ENCODE measurements at regions of chrX and their contacts with region 1.

Region 1: GRCh38 chrX:46903458-46904242 is 8.6 kb upstream of the JADE3 start:
- DNase-seq: peak; percentile 72
- ATAC-seq: peak; percentile 98
- H3K4me3 Mint-ChIP-seq: peak overlapping the region; percentile 61
- H3K27ac Mint-ChIP-seq: no peak overlapping the region
- H3K4me1 Mint-ChIP-seq: peaks cover 5% of the 10 kb centered on the region; the same call in 1 of the 2 replicates
- H3K27me3 Mint-ChIP-seq: no peaks in the 10 kb centered on the region; the same call in 1 of the 2 replicates
- CTCF ChIP-seq: no peak

Region 2: GRCh38 chrX:47030339-47030738 is 126.7 kb after region 1 on chrX:
- CTCF ChIA-PET with region 1: interaction called, 10 read pairs
- POLR2A ChIA-PET with region 1: no interaction called
- DNase-seq: no peak
- ATAC-seq: no peak
- H3K4me3 Mint-ChIP-seq: no peak overlapping the region
- H3K27ac Mint-ChIP-seq: no peak overlapping the region
- H3K4me1 Mint-ChIP-seq: no peaks in the 10 kb centered on the region
- H3K27me3 Mint-ChIP-seq: no peaks in the 10 kb centered on the region
- CTCF ChIP-seq: no peak